Activated B cell treated with CpG ODN at 0.5 μM for 24 hours (primary cell): ENCODE measurements at regions of chr17 and their contacts with region 1.

Region 1: GRCh38 chr17:30970831-30971567 is at the start of gene RNF135:
- DNase-seq: peak; percentile 74
- ATAC-seq: peak; percentile 67
- H3K4me3 Mint-ChIP-seq: peak within 1 kb of the TSS; percentile 97
- H3K27ac Mint-ChIP-seq: peak within 1 kb of the TSS; percentile 98
- H3K4me1 Mint-ChIP-seq: peaks cover 65% of the 10 kb centered on the region
- H3K27me3 Mint-ChIP-seq: no peaks in the 10 kb centered on the region
- CTCF ChIP-seq: no peak
- total RNA-seq, gene RNF135: 16.7 and 18.5 TPM in 2 replicates

Region 2: GRCh38 chr17:30831663-30832437 is 139.1 kb before region 1 on chr17 and contains the start of gene ATAD5:
- CTCF ChIA-PET with region 1: no interaction called
- POLR2A ChIA-PET with region 1: interaction called, 5 read pairs
- intact Hi-C with region 1: loop called (anchors 2 kb)
- DNase-seq: peak; percentile 84
- ATAC-seq: peak; percentile 97
- H3K4me3 Mint-ChIP-seq: peak within 1 kb of the TSS; percentile 97
- H3K27ac Mint-ChIP-seq: peak within 1 kb of the TSS; percentile 91
- H3K4me1 Mint-ChIP-seq: peaks cover 23% of the 10 kb centered on the region
- H3K27me3 Mint-ChIP-seq: no peaks in the 10 kb centered on the region
- CTCF ChIP-seq: no peak
- total RNA-seq, gene ATAD5: 6.6 and 8.7 TPM in 2 replicates

Region 3: DNA sequence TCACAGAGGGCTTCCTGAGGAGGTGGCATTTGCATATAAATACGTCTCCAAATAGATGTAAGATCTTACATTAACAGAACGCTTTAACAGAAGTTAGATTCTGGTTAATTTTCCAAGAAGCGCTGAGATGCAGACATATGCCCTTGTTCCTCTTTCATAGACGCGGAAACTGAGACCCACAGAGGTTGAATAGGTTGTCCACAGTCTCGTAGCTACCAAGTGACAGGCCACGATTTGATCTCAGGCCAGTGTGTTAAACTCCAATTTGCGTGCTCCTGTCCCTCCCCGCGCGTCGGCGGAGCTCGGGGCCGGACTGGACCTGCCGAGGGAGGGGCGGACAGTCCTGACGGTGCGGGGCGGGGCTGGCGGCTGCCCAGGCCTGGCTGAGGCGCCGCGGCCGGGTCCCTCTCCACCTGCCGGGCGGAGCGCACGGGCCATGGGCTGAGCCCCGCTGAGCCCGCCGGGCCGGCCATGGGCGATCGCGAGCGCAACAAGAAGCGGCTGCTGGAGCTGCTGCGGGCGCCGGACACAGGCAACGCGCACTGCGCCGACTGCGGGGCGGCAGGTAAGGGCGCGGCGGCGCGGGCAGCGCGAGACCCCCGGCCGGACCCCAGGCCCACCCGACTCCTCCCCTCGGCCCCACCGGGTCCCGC is 49.3 kb before region 1 on chr17 and contains the start of gene ADAP2:
- CTCF ChIA-PET with region 1: no interaction called
- POLR2A ChIA-PET with region 1: interaction called, 44 read pairs
- intact Hi-C with region 1: loop called (anchors 1 kb)
- DNase-seq: peak; percentile 53
- ATAC-seq: peak; percentile 73
- H3K4me3 Mint-ChIP-seq: peak within 1 kb of the TSS; percentile 93
- H3K27ac Mint-ChIP-seq: peak within 1 kb of the TSS; percentile 77
- H3K4me1 Mint-ChIP-seq: peaks cover 23% of the 10 kb centered on the region
- H3K27me3 Mint-ChIP-seq: peaks cover 1% of the 10 kb centered on the region
- CTCF ChIP-seq: no peak
- total RNA-seq, gene ADAP2: 16.0 and 16.9 TPM in 2 replicates

Region 4: DNA sequence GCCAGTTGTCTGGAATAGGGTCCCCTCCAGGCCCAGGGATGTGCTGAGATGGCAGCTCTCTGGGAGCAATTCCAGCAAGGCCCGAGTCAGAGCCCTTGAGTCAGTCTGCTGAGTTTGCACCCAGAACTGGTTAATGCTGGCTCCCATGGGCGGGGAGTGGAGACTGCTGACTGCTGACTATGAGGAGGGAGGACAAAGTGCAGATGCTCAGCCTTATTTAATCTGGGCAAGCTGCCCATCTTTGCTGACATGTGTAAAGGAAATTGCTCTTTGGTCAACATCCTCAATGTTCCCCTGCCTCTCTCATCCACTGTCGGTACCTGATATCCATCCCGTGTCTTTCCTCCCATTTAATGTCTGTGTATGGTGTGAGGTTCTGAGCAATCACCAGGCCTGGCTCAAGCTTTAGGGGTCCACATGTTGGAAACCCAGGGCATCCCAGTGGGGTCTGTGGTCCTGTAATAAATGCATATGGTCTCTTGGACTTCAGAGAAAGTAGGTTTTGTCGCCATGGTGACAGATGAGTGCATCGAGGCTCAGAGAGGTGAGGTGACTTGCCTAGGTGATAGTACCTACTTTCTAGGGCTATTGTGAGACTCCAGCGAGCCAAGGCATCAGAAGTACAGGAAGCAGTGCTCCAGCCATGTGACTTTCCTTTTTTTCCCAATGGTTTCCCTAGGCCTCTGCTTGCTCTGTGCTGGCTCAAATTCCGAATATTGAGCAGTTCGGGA is 20.2 kb before region 1 on chr17:
- CTCF ChIA-PET with region 1: no interaction called
- POLR2A ChIA-PET with region 1: interaction called, 38 read pairs
- intact Hi-C with region 1: no loop called
- DNase-seq: no peak
- ATAC-seq: no peak
- H3K4me3 Mint-ChIP-seq: no peak overlapping the region
- H3K27ac Mint-ChIP-seq: peak overlapping the region; percentile 63
- H3K4me1 Mint-ChIP-seq: peaks cover 50% of the 10 kb centered on the region
- H3K27me3 Mint-ChIP-seq: no peaks in the 10 kb centered on the region
- CTCF ChIP-seq: no peak

Region 5: DNA sequence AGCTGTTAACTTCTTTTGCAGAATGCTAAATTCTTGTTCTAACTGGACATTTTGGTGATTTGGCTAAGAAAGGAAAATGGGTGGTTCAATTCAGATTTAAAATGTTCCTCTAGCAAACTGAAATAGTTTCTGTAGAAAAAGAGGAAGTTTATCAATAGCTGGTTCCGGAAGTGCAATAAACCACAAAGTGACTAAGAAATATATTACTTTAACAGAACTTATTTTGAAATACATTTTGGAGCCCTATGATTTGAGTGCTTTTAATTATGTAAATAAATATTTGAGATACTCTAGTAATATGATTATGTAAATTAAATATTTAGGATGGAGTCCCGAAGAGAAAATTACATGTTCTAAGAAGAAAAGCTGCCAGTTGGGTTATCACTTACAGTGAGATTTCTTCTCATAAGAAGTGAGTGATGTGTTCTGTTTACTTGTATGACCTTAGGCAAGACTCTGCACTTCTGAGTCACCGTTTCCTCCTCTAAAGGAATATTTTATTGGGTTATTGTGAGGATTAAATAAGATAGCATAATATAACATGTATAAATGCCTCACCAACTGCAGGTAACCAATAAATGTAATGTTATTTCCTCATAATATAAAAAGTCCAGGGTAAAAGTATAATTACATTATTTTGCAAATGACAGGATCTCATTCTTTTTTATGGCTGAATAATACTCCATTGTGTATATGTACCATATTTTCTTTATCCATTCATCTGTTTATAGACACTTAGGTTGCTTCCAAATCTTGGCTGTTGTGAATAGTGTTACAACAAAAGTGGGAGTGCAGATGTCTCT is 343.2 kb after region 1 on chr17 and contains the start of gene EVI2B:
- CTCF ChIA-PET with region 1: no interaction called
- POLR2A ChIA-PET with region 1: interaction called, 5 read pairs
- intact Hi-C with region 1: loop called (anchors 5 kb)
- DNase-seq: no peak
- ATAC-seq: peak; percentile 25
- H3K4me3 Mint-ChIP-seq: peak within 1 kb of the TSS; percentile 93
- H3K27ac Mint-ChIP-seq: peak within 1 kb of the TSS; percentile 94
- H3K4me1 Mint-ChIP-seq: peaks cover 63% of the 10 kb centered on the region
- H3K27me3 Mint-ChIP-seq: no peaks in the 10 kb centered on the region
- CTCF ChIP-seq: no peak
- total RNA-seq, gene EVI2B: 104 and 111 TPM in 2 replicates